ENCODE measurements at regions of chr13 and their contacts with region 1.

Region 1: DNA sequence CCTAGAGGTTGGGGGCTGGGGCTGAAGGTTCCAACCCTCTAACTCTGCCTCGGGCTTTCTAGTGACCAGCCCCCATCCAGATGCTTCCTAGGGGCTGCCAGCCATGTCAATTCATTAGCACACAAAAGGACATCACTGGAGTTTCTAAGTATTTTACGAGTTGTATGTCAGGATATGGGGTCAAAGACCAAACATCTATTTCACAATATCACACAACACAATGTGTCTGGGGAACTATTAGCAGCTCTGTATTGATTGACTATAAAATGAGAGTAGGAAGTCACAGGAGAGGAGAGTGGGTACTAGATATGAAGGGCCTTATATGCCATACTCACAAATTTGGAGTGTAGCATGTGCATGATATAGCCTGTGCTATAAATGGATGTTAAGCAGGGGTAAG is 42.1 kb downstream of the LPAR6 start:
- DNase-seq: no peak
- ATAC-seq: no peak
- H3K4me3 ChIP-seq: no peak overlapping the region
- H3K4me3 Mint-ChIP-seq: no peak overlapping the region
- H3K27ac ChIP-seq: no peak overlapping the region
- H3K27ac Mint-ChIP-seq: no peak overlapping the region
- H3K4me1 ChIP-seq: no peaks in the 10 kb centered on the region
- H3K4me1 Mint-ChIP-seq: no peaks in the 10 kb centered on the region
- H3K27me3 ChIP-seq: no peaks in the 10 kb centered on the region
- H3K27me3 Mint-ChIP-seq: no peaks in the 10 kb centered on the region

Region 2: DNA sequence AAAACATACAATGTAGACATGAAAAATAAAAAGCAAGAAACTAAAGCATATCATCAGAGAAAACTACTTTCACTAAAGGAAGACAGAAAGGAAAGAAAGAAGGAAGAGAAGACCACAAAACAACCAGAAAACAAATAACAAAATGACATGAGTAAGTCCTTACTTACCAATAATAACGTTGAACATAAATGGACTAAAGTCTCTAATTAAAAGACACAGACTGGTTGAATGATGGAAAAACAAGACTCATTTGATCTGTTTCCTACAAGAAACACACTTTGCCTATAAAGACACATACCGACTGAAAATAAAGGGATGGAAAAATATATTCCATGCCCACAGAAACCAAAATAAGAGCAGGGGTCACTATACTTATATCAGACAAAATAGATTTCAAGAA is 21.3 kb before region 1 on chr13:
- CTCF ChIA-PET with region 1: no interaction called
- POLR2A ChIA-PET with region 1: no interaction called
- DNase-seq: no peak
- ATAC-seq: no peak
- H3K4me3 ChIP-seq: no peak overlapping the region
- H3K4me3 Mint-ChIP-seq: no peak overlapping the region
- H3K27ac ChIP-seq: no peak overlapping the region
- H3K27ac Mint-ChIP-seq: no peak overlapping the region
- H3K4me1 ChIP-seq: no peaks in the 10 kb centered on the region
- H3K4me1 Mint-ChIP-seq: peaks cover 0 to 2% (median 0%) of the 10 kb centered on the region in 3 donors
- H3K27me3 ChIP-seq: no peaks in the 10 kb centered on the region
- H3K27me3 Mint-ChIP-seq: no peaks in the 10 kb centered on the region

Region 3: GRCh38 chr13:48586591-48587103 is 215.8 kb after region 1 on chr13:
- CTCF ChIA-PET with region 1: no interaction called
- POLR2A ChIA-PET with region 1: no interaction called
- DNase-seq: peak in 1 of 35 experiments; percentile 20
- ATAC-seq: peak; percentile 27 to 63 (median 40)
- H3K4me3 ChIP-seq: no peak overlapping the region
- H3K4me3 Mint-ChIP-seq: peak overlapping the region in 1 of 3 donors; percentile 43
- H3K27ac ChIP-seq: peak overlapping the region; percentile 34
- H3K27ac Mint-ChIP-seq: peak overlapping the region; percentile 45 to 62
- H3K4me1 ChIP-seq: peaks cover 3 to 14% of the 10 kb centered on the region in 2 experiments
- H3K4me1 Mint-ChIP-seq: peaks cover 14 to 20% (median 19%) of the 10 kb centered on the region in 3 donors
- H3K27me3 ChIP-seq: peaks cover 0 to 4% of the 10 kb centered on the region in 2 experiments
- H3K27me3 Mint-ChIP-seq: peaks cover 0 to 8% of the 10 kb centered on the region in 2 donors

Region 4: DNA sequence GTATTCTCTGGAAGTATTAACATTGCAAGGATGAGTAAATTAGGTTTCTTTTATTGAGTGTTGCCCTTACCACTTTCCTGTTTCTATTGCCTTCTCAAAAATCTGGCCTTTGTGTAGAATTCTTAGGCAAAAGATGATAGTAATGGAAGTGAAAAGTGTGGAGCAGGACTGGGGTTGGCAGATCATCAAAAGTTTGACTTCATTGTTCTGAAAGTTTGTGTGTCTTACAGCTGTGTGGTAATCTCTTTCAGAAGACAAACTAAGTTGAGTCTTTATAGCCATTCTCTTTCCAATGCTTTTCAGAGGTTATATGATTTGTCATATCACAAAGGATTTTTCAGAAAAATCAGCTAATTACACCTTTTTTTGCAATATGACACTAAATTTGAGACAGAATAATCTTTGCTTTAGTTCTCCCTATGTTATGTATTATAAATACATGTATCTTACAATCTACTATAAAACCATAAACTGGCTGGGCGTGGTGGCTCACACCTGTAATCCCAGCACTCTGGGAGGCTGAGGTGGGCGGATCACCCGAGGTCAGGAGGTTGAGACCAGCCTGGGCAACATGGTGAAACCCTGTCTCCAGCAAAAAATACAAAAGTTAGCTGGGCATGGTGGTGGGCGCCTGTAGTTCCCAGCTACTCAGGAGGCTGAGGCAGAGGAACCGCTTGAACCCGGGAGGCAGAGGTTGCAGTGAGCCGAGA is 1635.8 kb after region 1 on chr13:
- CTCF ChIA-PET with region 1: interaction called in 1 of 2 experiments, 16 read pairs
- POLR2A ChIA-PET with region 1: no interaction called
- DNase-seq: no peak
- ATAC-seq: no peak
- H3K4me3 ChIP-seq: no peak overlapping the region
- H3K4me3 Mint-ChIP-seq: no peak overlapping the region
- H3K27ac ChIP-seq: no peak overlapping the region
- H3K27ac Mint-ChIP-seq: peak overlapping the region; percentile 7 to 24
- H3K4me1 ChIP-seq: peaks cover 3 to 21% of the 10 kb centered on the region in 2 experiments
- H3K4me1 Mint-ChIP-seq: peaks cover 37 to 54% (median 49%) of the 10 kb centered on the region in 3 donors
- H3K27me3 ChIP-seq: no peaks in the 10 kb centered on the region
- H3K27me3 Mint-ChIP-seq: no peaks in the 10 kb centered on the region

Measured in T-cell (primary cell).